ENCODE measurements at regions of chr17 and their contacts with region 1.

Region 1: GRCh38 chr17:10875979-10876555 is 38.2 kb upstream of the PIRT start:
- H3K4me3 Mint-ChIP-seq: no peak overlapping the region
- H3K27ac Mint-ChIP-seq: no peak overlapping the region
- H3K4me1 Mint-ChIP-seq: peaks cover 5% of the 10 kb centered on the region
- H3K27me3 Mint-ChIP-seq: no peaks in the 10 kb centered on the region

Region 2: DNA sequence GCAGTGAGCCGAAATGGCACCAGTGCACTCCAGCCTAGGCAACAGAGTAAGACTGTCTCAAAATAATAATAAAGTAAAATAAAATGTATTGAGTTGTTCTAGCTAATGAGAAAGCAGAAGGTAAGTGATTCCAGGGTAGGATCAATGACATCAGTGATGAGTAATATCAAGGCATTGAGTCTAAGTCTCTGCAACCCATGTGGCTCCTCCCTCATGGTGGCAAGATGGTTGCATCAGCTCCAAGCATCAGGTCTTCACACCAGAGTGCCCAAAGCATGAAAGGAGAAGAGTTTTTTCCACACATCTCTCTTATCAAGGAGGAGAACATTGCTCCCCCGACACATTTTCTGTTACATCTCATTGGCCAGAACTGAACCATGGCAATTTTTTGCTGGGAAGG is 642.9 kb before region 1 on chr17:
- intact Hi-C with region 1: no loop called
- H3K4me3 Mint-ChIP-seq: no peak overlapping the region
- H3K27ac Mint-ChIP-seq: no peak overlapping the region
- H3K4me1 Mint-ChIP-seq: no peaks in the 10 kb centered on the region
- H3K27me3 Mint-ChIP-seq: peaks cover 10% of the 10 kb centered on the region

Region 3: GRCh38 chr17:10968007-10968406 is 91.9 kb after region 1 on chr17:
- intact Hi-C with region 1: no loop called
- H3K4me3 Mint-ChIP-seq: no peak overlapping the region
- H3K27ac Mint-ChIP-seq: no peak overlapping the region
- H3K4me1 Mint-ChIP-seq: no peaks in the 10 kb centered on the region
- H3K27me3 Mint-ChIP-seq: no peaks in the 10 kb centered on the region

Region 4: DNA sequence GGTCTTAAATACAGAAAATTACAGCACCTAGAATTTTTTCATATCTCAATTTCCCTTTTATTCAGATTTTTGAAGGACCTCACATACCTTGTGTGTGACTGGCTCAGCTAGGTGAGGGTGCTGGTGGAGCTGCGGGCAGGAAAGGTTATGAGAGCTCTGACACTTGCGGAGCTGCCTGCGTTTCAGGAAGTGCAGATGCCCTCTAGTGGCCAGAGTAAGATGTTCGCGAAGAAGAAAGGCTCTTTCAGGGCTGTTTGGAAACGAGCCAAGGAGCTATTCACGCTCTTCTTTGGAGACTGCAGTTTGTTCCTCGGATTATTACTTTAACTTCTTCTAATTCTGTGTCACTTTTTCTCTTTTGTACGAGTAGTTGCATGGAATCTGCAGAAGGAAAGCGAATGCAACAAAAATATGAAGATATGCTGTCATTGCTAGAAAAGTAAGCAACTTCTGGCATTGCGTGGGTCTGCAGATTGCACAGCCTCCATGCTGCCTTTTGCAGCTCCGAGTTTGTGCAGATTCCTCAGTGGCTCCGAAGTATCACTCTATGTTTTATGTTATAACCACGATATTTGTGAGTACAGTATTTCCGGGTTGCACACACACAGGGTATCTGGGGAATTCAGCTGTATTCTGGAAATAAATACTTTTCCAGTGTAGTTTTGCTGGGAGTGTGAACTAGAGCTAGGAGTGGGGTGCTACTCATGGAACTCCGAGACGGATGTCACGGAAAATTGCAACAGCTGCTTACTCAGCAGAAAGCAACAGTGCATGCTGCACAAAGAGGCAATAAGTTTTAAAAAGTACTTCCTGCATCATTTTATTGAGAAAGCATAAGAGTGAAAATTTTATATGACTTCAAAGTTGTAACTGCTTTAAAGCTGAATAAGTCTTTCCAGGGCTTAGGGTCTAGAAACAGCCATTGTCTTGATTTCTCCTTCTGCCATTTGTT is 768.5 kb after region 1 on chr17:
- intact Hi-C with region 1: loop called (anchors 5 kb)
- H3K4me3 Mint-ChIP-seq: no peak overlapping the region
- H3K27ac Mint-ChIP-seq: no peak overlapping the region
- H3K4me1 Mint-ChIP-seq: no peaks in the 10 kb centered on the region
- H3K27me3 Mint-ChIP-seq: no peaks in the 10 kb centered on the region